Heart left ventricle (tissue), 16 donors: ENCODE measurements at regions of chr4 and their contacts with region 1.

Region 1: DNA sequence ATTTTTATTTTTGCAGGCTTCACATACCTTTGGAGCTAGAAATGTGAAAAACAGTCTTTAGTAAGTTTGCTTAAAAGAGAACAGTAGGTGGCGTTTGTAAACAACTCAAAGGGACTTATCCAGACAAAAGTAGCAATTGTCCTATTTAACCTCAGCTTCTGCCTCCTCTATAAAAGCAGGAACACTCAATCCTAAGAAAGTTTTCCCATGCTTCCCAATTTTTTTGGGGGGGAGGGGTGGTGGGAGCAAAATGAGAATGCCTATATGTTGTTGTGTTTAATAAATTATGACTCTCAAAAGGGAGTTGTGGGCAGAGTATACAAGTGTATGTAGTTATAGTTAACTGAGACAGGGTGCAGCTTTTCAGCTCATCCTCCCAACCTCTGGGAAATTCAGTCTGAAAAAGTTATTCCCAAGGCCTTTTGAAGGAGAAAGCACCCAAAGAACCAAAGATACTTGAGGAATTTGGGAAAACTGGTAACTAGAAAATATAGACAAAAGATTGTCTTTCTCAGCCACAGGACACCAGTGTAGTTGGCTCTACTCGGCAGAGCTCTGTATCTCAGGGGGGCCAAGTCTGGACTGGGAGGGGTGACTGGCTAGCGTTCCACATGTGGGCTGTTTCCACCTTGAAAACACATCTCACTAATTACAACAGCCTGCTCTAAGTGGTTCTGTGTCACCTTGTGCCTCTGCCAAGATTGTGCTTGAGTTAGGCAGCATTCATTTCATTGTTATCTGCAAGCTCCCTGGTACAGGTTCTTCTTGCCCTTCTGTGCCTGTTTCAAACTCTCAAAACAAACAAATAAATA is 2.8 kb downstream of the SFRP2 start:
- DNase-seq: no peak
- ATAC-seq: no peak
- H3K4me3 ChIP-seq: no peak overlapping the region
- H3K27ac ChIP-seq: no peak overlapping the region
- H3K4me1 ChIP-seq: peaks cover 0 to 19% (median 14%) of the 10 kb centered on the region in 12 donors
- H3K27me3 ChIP-seq: peaks cover 26 to 86% (median 43%) of the 10 kb centered on the region in 9 donors
- CTCF ChIP-seq: peak in 7 of 12 donors; percentile 19 to 47 (median 34)
- POLR2A ChIP-seq: no peak

Region 2: DNA sequence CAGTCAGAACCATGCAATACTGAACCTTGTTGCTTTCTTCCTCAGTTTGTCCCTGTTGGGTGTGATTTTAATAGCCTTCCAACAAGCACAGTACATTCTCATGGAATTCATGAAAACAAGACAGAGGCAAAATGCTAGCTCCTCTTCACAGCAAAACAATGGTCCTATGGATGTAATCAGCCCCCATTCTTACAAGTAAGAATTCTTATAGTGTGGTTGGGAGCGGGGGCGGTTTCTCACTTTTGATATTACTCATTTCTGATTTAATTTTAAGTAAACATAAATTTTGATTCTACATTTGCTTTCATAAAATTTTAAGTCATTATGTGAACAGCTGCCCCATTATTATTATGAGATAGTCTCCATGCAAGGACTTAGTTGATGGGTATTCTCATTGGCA is 182.9 kb before region 1 on chr4:
- intact Hi-C with region 1: no loop called
- DNase-seq: no peak
- ATAC-seq: no peak
- H3K4me3 ChIP-seq: no peak overlapping the region
- H3K27ac ChIP-seq: no peak overlapping the region
- H3K4me1 ChIP-seq: peaks cover 0 to 5% (median 0%) of the 10 kb centered on the region in 12 donors
- H3K27me3 ChIP-seq: no peaks in the 10 kb centered on the region
- CTCF ChIP-seq: no peak
- POLR2A ChIP-seq: no peak

Region 3: GRCh38 chr4:153668647-153669046 is 117.5 kb before region 1 on chr4:
- intact Hi-C with region 1: no loop called
- DNase-seq: no peak
- ATAC-seq: no peak
- H3K4me3 ChIP-seq: no peak overlapping the region
- H3K27ac ChIP-seq: no peak overlapping the region
- H3K4me1 ChIP-seq: no peaks in the 10 kb centered on the region
- H3K27me3 ChIP-seq: no peaks in the 10 kb centered on the region
- CTCF ChIP-seq: no peak
- POLR2A ChIP-seq: no peak

Region 4: GRCh38 chr4:154305616-154306015 is 519.5 kb after region 1 on chr4:
- intact Hi-C with region 1: loop called in 5 of 10 experiments (anchors 5 to 10 kb)
- DNase-seq: no peak
- ATAC-seq: no peak
- H3K4me3 ChIP-seq: no peak overlapping the region
- H3K27ac ChIP-seq: no peak overlapping the region
- H3K4me1 ChIP-seq: no peaks in the 10 kb centered on the region
- H3K27me3 ChIP-seq: no peaks in the 10 kb centered on the region
- CTCF ChIP-seq: no peak
- POLR2A ChIP-seq: no peak

Region 5: GRCh38 chr4:154314248-154314647 is 528.1 kb after region 1 on chr4:
- intact Hi-C with region 1: loop called in 5 of 10 experiments (anchors 5 to 10 kb)
- DNase-seq: no peak
- ATAC-seq: no peak
- H3K4me3 ChIP-seq: no peak overlapping the region
- H3K27ac ChIP-seq: no peak overlapping the region
- H3K4me1 ChIP-seq: no peaks in the 10 kb centered on the region
- H3K27me3 ChIP-seq: no peaks in the 10 kb centered on the region
- CTCF ChIP-seq: peak in 3 of 12 donors; percentile 13 to 19 (median 15)
- POLR2A ChIP-seq: no peak